ENCODE measurements at regions of chr3 and their contacts with region 1.

Region 1: GRCh38 chr3:159884661-159885402 is 103.8 kb upstream of the IL12A start:
- DNase-seq: no peak
- ATAC-seq: peak; percentile 80
- H3K4me3 ChIP-seq: no peak overlapping the region
- H3K27ac ChIP-seq: no peak overlapping the region
- H3K4me1 ChIP-seq: no peaks in the 10 kb centered on the region
- H3K27me3 ChIP-seq: no peaks in the 10 kb centered on the region
- CTCF ChIP-seq: peak; percentile 40 to 72 (median 56); a peak in 5 of 6 replicates
- EP300 ChIP-seq: no peak
- POLR2A ChIP-seq: no peak
- RAD21 ChIP-seq: peak; percentile 75

Region 2: DNA sequence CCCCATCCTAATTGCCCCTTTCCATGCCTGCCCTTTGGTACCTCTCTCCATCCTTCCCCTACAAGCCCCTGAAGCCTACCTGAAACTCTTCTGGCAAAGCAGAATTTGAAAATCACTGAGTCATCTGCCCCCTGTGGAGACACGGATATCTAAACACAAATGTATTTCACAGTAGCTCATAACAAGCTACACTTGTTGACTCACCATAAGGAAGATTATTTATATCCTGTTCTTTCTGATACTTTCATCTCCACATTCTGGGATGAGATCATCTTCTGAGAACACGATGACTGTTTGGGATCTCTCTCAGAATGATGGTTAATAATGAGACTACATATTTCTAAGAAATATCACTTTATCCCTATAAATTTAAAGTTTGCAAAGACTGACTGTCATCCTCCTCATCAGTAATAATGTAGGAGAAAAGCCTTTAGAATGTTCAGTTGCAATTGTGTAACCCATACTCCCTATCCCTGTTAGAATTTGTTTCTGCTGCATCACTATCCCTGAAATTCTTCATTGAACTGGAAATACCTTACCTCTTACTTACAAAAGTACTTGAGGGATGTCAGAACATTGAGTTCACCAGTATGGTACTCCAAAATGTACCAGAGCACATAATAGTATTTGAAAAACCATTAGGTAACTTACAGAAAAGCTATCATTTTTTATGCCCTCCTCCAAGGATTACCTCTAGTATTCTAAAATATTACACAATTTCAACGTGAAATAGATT is 12.3 kb before region 1 on chr3:
- CTCF ChIA-PET with region 1: interaction called, 50 read pairs
- POLR2A ChIA-PET with region 1: no interaction called
- RAD21 ChIA-PET with region 1: interaction called, 15 read pairs
- SMC1A ChIA-PET with region 1: interaction called, 62 read pairs
- in situ Hi-C with region 1: no loop called
- intact Hi-C with region 1: no loop called
- DNase-seq: no peak
- ATAC-seq: peak; percentile 60
- H3K4me3 ChIP-seq: no peak overlapping the region
- H3K27ac ChIP-seq: no peak overlapping the region
- H3K4me1 ChIP-seq: no peaks in the 10 kb centered on the region
- H3K27me3 ChIP-seq: no peaks in the 10 kb centered on the region; a peak in 1 of 4 replicates
- CTCF ChIP-seq: no peak; a peak in 1 of 6 replicates
- EP300 ChIP-seq: no peak
- POLR2A ChIP-seq: no peak
- RAD21 ChIP-seq: no peak

Region 3: GRCh38 chr3:159919873-159920272 is 35.0 kb after region 1 on chr3:
- CTCF ChIA-PET with region 1: interaction called, 52 read pairs
- POLR2A ChIA-PET with region 1: no interaction called
- RAD21 ChIA-PET with region 1: interaction called, 18 read pairs
- SMC1A ChIA-PET with region 1: interaction called, 59 read pairs
- in situ Hi-C with region 1: no loop called
- intact Hi-C with region 1: loop called (anchors 1 kb)
- DNase-seq: no peak
- ATAC-seq: peak; percentile 81
- H3K4me3 ChIP-seq: no peak overlapping the region
- H3K27ac ChIP-seq: peak overlapping the region; percentile 22; the same call in 1 of the 2 replicates
- H3K4me1 ChIP-seq: peaks cover 46% of the 10 kb centered on the region
- H3K27me3 ChIP-seq: no peaks in the 10 kb centered on the region
- CTCF ChIP-seq: no peak
- EP300 ChIP-seq: peak; percentile 75 to 80; a peak in 3 of 4 replicates
- POLR2A ChIP-seq: no peak
- RAD21 ChIP-seq: 0 out of 2 replicates have a peak, but pooled peaks have one; percentile 2

Region 4: DNA sequence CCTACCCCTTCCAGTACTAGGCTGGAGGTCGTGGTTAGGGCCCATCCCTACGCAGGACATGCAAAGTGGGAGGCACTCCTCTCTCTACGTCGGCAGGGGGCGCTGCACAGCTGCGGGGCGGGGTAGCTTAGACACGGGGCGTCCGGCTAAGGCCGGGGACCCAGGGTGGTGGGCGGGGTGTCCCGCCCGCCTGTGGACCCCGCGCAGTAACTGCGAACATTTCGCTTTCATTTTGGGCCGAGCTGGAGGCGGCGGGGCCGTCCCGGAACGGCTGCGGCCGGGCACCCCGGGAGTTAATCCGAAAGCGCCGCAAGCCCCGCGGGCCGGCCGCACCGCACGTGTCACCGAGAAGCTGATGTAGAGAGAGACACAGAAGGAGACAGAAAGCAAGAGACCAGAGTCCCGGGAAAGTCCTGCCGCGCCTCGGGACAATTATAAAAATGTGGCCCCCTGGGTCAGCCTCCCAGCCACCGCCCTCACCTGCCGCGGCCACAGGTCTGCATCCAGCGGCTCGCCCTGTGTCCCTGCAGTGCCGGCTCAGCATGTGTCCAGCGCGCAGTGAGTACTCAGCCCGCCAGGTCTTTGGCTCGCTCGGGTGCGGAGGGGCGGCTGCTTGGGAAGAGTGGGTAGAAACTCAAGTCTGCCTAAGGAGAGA is 103.9 kb after region 1 on chr3 and contains the start of gene IL12A:
- CTCF ChIA-PET with region 1: interaction called, 284 read pairs
- POLR2A ChIA-PET with region 1: interaction called, 3 read pairs
- RAD21 ChIA-PET with region 1: interaction called, 119 read pairs
- SMC1A ChIA-PET with region 1: interaction called, 197 read pairs
- in situ Hi-C with region 1: no loop called
- intact Hi-C with region 1: loop called (anchors 5 kb)
- DNase-seq: peak; percentile 72
- ATAC-seq: peak; percentile 92
- H3K4me3 ChIP-seq: peak within 1 kb of the TSS; percentile 74
- H3K27ac ChIP-seq: peak within 1 kb of the TSS; percentile 75
- H3K4me1 ChIP-seq: peaks cover 17% of the 10 kb centered on the region
- H3K27me3 ChIP-seq: no peaks in the 10 kb centered on the region
- CTCF ChIP-seq: peak; percentile 90 to 96 (median 96)
- EP300 ChIP-seq: no peak
- POLR2A ChIP-seq: peak; percentile 70
- RAD21 ChIP-seq: peak; percentile 76
- polyA plus RNA-seq, gene IL12A: 0.50 to 2.6 TPM

Region 5: GRCh38 chr3:160027541-160028195 is 142.8 kb after region 1 on chr3:
- CTCF ChIA-PET with region 1: interaction called, 39 read pairs
- POLR2A ChIA-PET with region 1: no interaction called
- RAD21 ChIA-PET with region 1: interaction called, 15 read pairs
- SMC1A ChIA-PET with region 1: interaction called, 18 read pairs
- in situ Hi-C with region 1: no loop called
- intact Hi-C with region 1: no loop called
- DNase-seq: peak; percentile 55
- ATAC-seq: peak; percentile 89
- H3K4me3 ChIP-seq: no peak overlapping the region
- H3K27ac ChIP-seq: peak overlapping the region; percentile 94
- H3K4me1 ChIP-seq: peaks cover 26% of the 10 kb centered on the region
- H3K27me3 ChIP-seq: no peaks in the 10 kb centered on the region
- CTCF ChIP-seq: no peak
- EP300 ChIP-seq: peak; percentile 61 to 64; a peak in 2 of 4 replicates
- POLR2A ChIP-seq: no peak
- RAD21 ChIP-seq: no peak

Region 6: GRCh38 chr3:160368804-160369203 is 484.0 kb after region 1 on chr3:
- CTCF ChIA-PET with region 1: no interaction called
- POLR2A ChIA-PET with region 1: no interaction called
- RAD21 ChIA-PET with region 1: no interaction called
- SMC1A ChIA-PET with region 1: no interaction called
- in situ Hi-C with region 1: no loop called
- intact Hi-C with region 1: no loop called
- DNase-seq: no peak
- ATAC-seq: peak; percentile 89
- H3K4me3 ChIP-seq: no peak overlapping the region
- H3K27ac ChIP-seq: no peak overlapping the region
- H3K4me1 ChIP-seq: no peaks in the 10 kb centered on the region
- H3K27me3 ChIP-seq: no peaks in the 10 kb centered on the region
- CTCF ChIP-seq: no peak
- EP300 ChIP-seq: no peak
- POLR2A ChIP-seq: no peak
- RAD21 ChIP-seq: no peak

Region 7: GRCh38 chr3:160413613-160414248 is 528.9 kb after region 1 on chr3:
- CTCF ChIA-PET with region 1: interaction called, 31 read pairs
- POLR2A ChIA-PET with region 1: no interaction called
- RAD21 ChIA-PET with region 1: interaction called, 29 read pairs
- SMC1A ChIA-PET with region 1: interaction called, 30 read pairs
- in situ Hi-C with region 1: no loop called
- intact Hi-C with region 1: loop called (anchors 5 kb)
- DNase-seq: peak; percentile 19
- ATAC-seq: peak; percentile 72
- H3K4me3 ChIP-seq: no peak overlapping the region
- H3K27ac ChIP-seq: no peak overlapping the region
- H3K4me1 ChIP-seq: no peaks in the 10 kb centered on the region
- H3K27me3 ChIP-seq: no peaks in the 10 kb centered on the region
- CTCF ChIP-seq: peak; percentile 77 to 83 (median 82)
- EP300 ChIP-seq: no peak
- POLR2A ChIP-seq: no peak
- RAD21 ChIP-seq: peak; percentile 93

Measured in GM12878 (cell line).